ENCODE measurements at regions of chr19 and their contacts with region 1.

Region 1: GRCh38 chr19:17605761-17606745 is 50.6 kb downstream of the COLGALT1 start:
- DNase-seq: peak; percentile 69
- ATAC-seq: peak; percentile 92
- H3K4me3 ChIP-seq: peak overlapping the region; percentile 46 to 57
- H3K27ac ChIP-seq: peak overlapping the region; percentile 71
- H3K4me1 ChIP-seq: no peaks in the 10 kb centered on the region
- H3K27me3 ChIP-seq: no peaks in the 10 kb centered on the region
- CTCF ChIP-seq: peak; percentile 67; the same call in 1 of the 2 replicates

Region 2: GRCh38 chr19:17665058-17665457 is 59.0 kb after region 1 on chr19:
- CTCF ChIA-PET with region 1: no interaction called
- POLR2A ChIA-PET with region 1: interaction called, 12 read pairs
- in situ Hi-C with region 1: no loop called
- intact Hi-C with region 1: no loop called
- DNase-seq: no peak
- ATAC-seq: no peak
- H3K4me3 ChIP-seq: no peak overlapping the region
- H3K27ac ChIP-seq: no peak overlapping the region
- H3K4me1 ChIP-seq: no peaks in the 10 kb centered on the region
- H3K27me3 ChIP-seq: no peaks in the 10 kb centered on the region
- CTCF ChIP-seq: no peak

Measured in Panc1 (cell line).